ENCODE measurements at regions of chr17 and their contacts with region 1.

Region 1: GRCh38 chr17:47066841-47067682 is 88.0 kb upstream of the RPRML start:
- DNase-seq: peak; percentile 90
- ATAC-seq: peak; percentile 96
- H3K4me3 Mint-ChIP-seq: peak overlapping the region; percentile 83
- H3K27ac Mint-ChIP-seq: peak overlapping the region; percentile 95
- H3K4me1 Mint-ChIP-seq: peaks cover 30% of the 10 kb centered on the region
- H3K27me3 Mint-ChIP-seq: no peaks in the 10 kb centered on the region

Region 2: DNA sequence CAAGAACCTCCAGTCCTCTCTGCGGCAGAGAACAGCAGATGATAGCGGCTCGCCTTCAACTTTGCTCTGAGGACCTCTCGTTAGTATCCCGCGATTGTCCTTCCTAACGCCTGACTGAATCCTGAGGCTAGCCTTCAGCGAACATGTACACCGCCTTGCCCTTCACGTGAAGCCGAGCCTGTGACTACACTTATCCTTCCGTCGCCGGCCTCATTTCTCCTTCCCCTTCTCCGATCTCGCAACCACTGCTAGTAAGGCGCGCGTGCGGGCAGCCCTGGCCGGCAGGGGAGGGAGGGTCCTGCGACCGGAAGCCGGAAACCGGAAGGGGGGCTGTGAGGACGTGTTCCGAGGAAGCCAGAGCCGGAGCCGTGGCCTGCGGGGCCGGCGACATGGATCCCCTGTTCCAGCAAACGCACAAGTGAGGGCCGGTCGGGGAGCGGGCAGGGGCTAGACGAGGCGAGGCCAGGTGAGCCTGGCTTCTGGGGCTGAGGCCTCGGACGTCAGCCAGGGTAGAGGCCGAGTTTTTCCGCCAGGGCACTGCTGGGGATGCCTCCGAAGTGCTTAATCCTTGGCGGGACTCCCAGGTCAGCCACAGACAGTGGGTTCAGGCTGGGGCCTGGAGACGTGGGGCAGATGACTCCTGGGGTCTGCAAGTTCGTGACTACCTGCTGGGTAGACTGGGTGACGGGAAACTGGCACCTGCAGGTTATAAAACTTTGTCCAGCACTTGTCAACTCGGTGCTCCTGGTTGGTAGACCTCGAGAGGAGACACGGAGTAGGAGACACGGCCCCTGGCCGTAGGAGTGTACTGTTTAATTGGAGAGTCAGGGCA is 144.0 kb before region 1 on chr17 and contains the start of gene GOSR2:
- CTCF ChIA-PET with region 1: no interaction called
- POLR2A ChIA-PET with region 1: no interaction called
- intact Hi-C with region 1: loop called in 1 of 2 experiments (anchors 1 kb)
- DNase-seq: peak; percentile 94
- ATAC-seq: peak; percentile 96
- H3K4me3 Mint-ChIP-seq: peak within 1 kb of the TSS; percentile 81
- H3K27ac Mint-ChIP-seq: peak within 1 kb of the TSS; percentile 100
- H3K4me1 Mint-ChIP-seq: peaks cover 44% of the 10 kb centered on the region
- H3K27me3 Mint-ChIP-seq: no peaks in the 10 kb centered on the region
- total RNA-seq, gene GOSR2: 38.9 to 42.7 TPM

Region 3: GRCh38 chr17:47099987-47100711 is 33.1 kb after region 1 on chr17:
- CTCF ChIA-PET with region 1: no interaction called
- POLR2A ChIA-PET with region 1: no interaction called
- intact Hi-C with region 1: loop called (anchors 1 kb)
- DNase-seq: peak; percentile 95
- ATAC-seq: peak; percentile 100
- H3K4me3 Mint-ChIP-seq: peak overlapping the region; percentile 87
- H3K27ac Mint-ChIP-seq: peak overlapping the region; percentile 97
- H3K4me1 Mint-ChIP-seq: peaks cover 19% of the 10 kb centered on the region
- H3K27me3 Mint-ChIP-seq: no peaks in the 10 kb centered on the region

Region 4: DNA sequence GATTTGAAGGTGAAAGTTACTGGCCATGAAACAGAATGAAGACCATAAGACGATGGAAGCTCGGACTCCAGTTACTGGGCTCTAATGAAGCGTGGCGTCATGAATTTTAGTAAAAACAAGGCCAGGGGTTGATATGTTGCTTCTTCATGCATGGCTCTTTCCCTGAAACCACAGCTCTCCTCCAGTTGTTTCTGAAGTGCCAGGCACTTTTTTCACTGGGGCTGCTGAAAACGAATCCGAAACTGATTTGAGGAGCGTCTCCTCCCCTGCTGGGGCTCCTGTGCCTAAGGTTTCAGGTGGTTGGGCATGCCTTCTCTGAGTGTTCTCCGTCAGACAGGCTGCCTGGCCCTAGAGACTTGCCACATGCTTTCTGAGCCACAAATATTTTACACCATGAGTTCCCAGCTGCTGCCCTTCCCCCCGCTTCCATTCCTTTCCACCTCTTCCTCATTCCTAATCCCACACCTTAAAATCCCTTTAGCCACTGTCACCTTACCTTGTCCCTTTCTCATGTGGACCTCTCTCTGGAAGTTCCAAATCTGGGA is 138.4 kb after region 1 on chr17:
- CTCF ChIA-PET with region 1: no interaction called
- POLR2A ChIA-PET with region 1: no interaction called
- intact Hi-C with region 1: loop called in 1 of 2 experiments (anchors 2 kb)
- DNase-seq: peak; percentile 82
- ATAC-seq: peak; percentile 67
- H3K4me3 Mint-ChIP-seq: peak overlapping the region; percentile 59
- H3K27ac Mint-ChIP-seq: peak overlapping the region; percentile 90
- H3K4me1 Mint-ChIP-seq: peaks cover 46% of the 10 kb centered on the region
- H3K27me3 Mint-ChIP-seq: no peaks in the 10 kb centered on the region

Region 5: GRCh38 chr17:47352848-47353247 is 285.8 kb after region 1 on chr17:
- CTCF ChIA-PET with region 1: no interaction called
- POLR2A ChIA-PET with region 1: no interaction called
- intact Hi-C with region 1: no loop called
- DNase-seq: no peak
- ATAC-seq: no peak
- H3K4me3 Mint-ChIP-seq: no peak overlapping the region
- H3K27ac Mint-ChIP-seq: no peak overlapping the region
- H3K4me1 Mint-ChIP-seq: peaks cover 4% of the 10 kb centered on the region
- H3K27me3 Mint-ChIP-seq: no peaks in the 10 kb centered on the region

Region 6: DNA sequence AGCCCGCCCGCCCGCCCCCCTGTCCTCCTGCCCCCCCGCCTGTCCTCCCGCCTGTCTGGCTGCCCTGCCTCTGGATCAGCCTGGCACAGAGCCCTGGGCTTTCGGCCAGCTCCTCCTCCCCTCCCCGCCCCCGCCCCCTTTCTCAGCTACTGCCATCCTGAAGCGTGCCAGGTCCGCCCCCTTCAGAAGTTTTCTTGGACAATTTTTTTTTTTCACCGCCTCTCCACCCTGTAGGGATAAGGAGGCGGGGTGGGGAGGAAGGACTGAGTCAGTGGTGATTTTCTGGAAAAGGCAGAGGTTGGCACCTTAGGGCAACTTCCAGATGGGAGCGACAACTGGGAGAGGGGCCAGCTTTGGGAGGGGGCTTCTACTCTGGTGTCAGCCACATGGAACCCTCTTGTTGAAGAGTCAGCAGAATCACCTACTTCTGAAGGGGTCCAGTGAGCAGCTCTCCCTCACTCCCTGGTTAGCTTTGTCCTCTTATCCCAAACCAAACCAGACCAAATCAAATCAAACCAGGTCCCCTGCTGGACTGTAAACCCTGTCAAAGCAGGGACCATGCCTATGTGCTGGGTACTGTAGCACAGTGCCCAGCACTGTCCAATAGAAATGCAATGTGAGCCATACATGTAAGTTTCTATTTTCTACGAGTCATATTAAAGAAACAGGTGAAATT is 1949.9 kb after region 1 on chr17:
- CTCF ChIA-PET with region 1: no interaction called
- POLR2A ChIA-PET with region 1: no interaction called
- intact Hi-C with region 1: no loop called
- DNase-seq: no peak
- ATAC-seq: no peak
- H3K4me3 Mint-ChIP-seq: no peak overlapping the region
- H3K27ac Mint-ChIP-seq: no peak overlapping the region
- H3K4me1 Mint-ChIP-seq: no peaks in the 10 kb centered on the region
- H3K27me3 Mint-ChIP-seq: peaks cover 30% of the 10 kb centered on the region